Activated CD4-positive, alpha-beta T cell treated with anti-CD3 and anti-CD28 coated beads, Interleukin-2, amount 10 ng/mL, durations not matched to agents 24 days and 14 days (primary cell): ENCODE measurements at regions of chr3 and their contacts with region 1.

Region 1: GRCh38 chr3:4387210-4388204 is 79.6 kb downstream of the SUMF1 start:
- DNase-seq: peak; percentile 48
- H3K4me3 Mint-ChIP-seq: peak overlapping the region; percentile 1
- H3K27ac Mint-ChIP-seq: peak overlapping the region; percentile 84
- H3K4me1 Mint-ChIP-seq: peaks cover 35% of the 10 kb centered on the region
- H3K27me3 Mint-ChIP-seq: no peaks in the 10 kb centered on the region

Region 2: GRCh38 chr3:4083225-4084011 is 304.1 kb before region 1 on chr3:
- intact Hi-C with region 1: no loop called
- DNase-seq: no peak
- H3K4me3 Mint-ChIP-seq: no peak overlapping the region
- H3K27ac Mint-ChIP-seq: no peak overlapping the region
- H3K4me1 Mint-ChIP-seq: no peaks in the 10 kb centered on the region
- H3K27me3 Mint-ChIP-seq: no peaks in the 10 kb centered on the region

Region 3: DNA sequence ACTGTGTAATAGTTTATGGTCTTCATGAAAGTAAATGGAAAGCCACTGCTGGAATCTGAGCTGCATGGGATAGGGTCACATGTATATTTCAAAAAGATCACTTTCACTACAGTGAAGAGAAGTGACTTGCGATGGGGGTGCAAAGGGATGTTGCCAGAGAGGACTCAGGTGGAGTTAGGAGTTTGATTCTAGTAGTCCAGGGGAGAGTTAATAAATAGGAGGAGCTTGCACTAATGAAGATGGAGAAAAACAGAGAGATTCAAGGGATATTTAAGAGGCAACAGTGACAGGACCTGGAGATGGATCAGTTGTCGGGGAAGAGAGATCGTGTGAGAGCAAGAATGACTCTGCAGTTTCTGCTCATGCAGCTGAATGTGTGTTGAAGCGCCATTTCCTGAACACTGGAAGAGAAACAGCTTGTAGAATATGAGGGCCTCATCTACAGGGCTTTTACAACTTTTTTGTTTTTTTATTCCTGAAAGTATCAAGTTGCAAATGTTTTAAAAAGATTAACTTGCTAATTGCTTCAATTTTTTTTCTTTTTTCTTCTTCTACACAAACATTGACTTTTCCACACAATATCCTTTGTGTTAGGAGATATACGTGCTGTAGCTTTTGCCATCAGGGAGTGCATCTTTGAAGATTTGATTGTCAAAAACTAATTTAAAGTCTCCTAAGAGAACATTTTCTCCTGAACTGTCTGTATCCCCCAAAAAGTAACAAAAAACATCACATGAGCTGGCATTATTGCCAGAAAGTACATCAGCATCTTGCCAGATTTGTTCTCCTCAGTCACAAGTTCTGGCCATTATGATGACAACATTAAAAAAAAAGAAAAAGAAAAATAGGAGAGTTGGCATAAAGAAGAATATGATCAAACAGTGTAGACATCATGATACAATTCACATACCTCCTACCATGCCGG is 46.8 kb before region 1 on chr3:
- intact Hi-C with region 1: no loop called
- DNase-seq: no peak
- H3K4me3 Mint-ChIP-seq: no peak overlapping the region
- H3K27ac Mint-ChIP-seq: no peak overlapping the region
- H3K4me1 Mint-ChIP-seq: peaks cover 5% of the 10 kb centered on the region
- H3K27me3 Mint-ChIP-seq: peaks cover 13% of the 10 kb centered on the region

Region 4: DNA sequence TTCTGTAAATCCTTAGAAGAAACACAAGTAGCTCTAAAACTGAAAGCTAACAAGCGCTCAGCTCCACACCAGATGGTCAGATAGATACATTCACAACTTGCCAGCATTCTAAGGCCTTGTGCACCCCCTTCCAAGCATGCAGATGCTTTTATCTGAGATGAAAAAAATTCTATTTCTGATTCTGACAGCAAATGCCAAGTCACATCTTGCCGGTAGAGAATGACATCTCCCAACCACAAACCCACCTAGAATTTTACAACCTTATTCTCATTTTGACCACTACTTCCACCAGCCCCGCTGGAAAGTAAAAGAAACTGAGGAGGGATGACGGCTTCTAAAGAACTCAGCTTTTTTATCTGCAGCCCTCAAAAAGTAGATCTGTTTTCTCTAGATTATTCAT is 21.9 kb after region 1 on chr3:
- intact Hi-C with region 1: loop called (anchors 1 kb)
- DNase-seq: peak; percentile 71
- H3K4me3 Mint-ChIP-seq: peak overlapping the region; percentile 57
- H3K27ac Mint-ChIP-seq: peak overlapping the region; percentile 87
- H3K4me1 Mint-ChIP-seq: peaks cover 43% of the 10 kb centered on the region
- H3K27me3 Mint-ChIP-seq: no peaks in the 10 kb centered on the region

Region 5: DNA sequence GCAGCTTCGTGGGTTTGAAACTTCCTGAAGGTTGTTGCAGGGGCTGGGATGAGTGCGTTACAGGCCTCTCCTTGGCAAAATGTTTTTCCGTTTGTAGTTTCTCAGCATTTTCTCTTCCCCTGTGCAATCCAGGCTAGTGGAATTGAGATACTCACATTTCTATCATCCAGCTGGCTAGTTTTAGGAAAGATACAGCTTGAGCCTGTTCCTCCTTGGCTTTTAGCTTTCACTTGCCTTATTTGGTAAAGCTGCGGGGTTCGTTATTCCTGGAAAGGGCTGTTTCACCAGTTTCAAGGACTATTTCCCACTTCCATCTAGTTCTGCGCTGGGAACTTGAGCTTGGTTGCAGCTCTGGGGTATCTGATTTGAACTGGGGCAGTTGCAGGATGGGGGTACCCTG is 195.9 kb after region 1 on chr3:
- intact Hi-C with region 1: no loop called
- DNase-seq: no peak
- H3K4me3 Mint-ChIP-seq: no peak overlapping the region
- H3K27ac Mint-ChIP-seq: no peak overlapping the region
- H3K4me1 Mint-ChIP-seq: peaks cover 29% of the 10 kb centered on the region
- H3K27me3 Mint-ChIP-seq: no peaks in the 10 kb centered on the region

Region 6: DNA sequence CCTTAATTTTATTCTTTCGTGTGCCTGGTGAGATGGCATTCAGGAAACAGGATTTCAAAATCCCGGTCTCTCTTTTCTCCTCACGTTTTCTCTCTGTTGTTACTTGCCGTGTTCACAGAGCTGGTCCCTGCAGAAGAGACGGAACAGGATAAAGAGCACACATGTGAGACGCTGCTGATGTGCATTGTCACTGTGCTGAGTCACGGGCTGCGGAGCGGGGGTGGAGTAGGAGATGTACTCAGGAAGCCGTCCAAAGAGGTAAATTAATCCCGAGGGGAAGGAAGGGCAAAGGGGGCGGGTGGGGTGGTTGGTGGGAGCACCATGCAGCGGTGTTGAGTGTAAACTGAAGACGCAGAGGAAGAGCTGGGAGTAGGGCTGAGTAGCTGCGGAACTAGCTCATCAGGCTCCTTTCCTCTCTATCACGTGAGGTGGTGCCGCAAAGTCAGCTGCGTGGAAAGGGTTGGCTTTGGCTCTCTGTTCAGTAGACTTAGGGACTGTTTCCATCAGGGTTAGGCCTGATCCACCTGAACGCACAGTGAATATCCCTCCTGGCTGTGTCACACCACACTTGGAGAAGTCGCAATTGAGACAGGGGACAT is 426.9 kb after region 1 on chr3:
- intact Hi-C with region 1: no loop called
- DNase-seq: peak; percentile 62
- H3K4me3 Mint-ChIP-seq: peak overlapping the region; percentile 50
- H3K27ac Mint-ChIP-seq: peak overlapping the region; percentile 76
- H3K4me1 Mint-ChIP-seq: peaks cover 40% of the 10 kb centered on the region
- H3K27me3 Mint-ChIP-seq: no peaks in the 10 kb centered on the region

Region 7: DNA sequence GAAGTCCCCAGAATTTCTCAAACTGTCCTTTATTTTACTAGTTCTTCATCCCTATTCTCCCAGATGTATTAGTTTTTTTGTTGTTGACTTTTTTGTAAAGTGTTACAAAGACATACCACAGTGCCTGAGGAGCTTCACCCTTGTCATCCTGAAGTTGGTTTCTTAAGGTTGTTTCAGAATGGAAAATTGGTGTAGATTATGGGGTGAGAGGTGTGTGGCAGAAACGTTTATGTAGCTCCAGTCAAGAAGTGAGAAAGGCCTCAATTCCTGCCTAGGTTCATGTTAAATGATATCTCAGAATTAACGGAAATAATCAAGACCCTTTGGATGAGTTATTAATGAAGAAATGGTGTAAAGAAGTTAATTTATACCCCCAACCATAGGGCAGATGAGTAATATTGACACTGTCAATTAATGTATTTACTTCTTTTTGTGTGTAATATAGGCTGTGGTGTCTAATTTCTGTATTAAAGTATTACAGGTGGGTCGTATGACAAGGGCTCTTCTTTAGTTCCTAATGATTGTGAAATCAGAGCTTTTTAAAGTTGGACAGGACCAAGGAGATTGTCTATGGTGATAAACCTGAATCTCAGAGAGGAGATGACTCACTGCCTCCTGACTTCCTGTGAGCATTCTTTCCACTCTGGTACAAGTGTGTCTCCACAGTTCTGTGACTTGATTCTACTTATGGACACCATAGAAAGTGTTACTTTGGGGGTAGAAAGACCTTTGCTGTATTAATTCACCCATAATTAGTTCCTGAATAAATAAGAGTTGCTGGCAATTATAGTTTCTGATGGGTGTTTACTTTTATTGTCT is 807.0 kb after region 1 on chr3:
- intact Hi-C with region 1: loop called (anchors 5 kb)
- DNase-seq: peak; percentile 85
- H3K4me3 Mint-ChIP-seq: peak overlapping the region; percentile 79
- H3K27ac Mint-ChIP-seq: peak overlapping the region; percentile 94
- H3K4me1 Mint-ChIP-seq: peaks cover 85% of the 10 kb centered on the region
- H3K27me3 Mint-ChIP-seq: no peaks in the 10 kb centered on the region